ENCODE measurements at regions of chr11 and their contacts with region 1.

Region 1: DNA sequence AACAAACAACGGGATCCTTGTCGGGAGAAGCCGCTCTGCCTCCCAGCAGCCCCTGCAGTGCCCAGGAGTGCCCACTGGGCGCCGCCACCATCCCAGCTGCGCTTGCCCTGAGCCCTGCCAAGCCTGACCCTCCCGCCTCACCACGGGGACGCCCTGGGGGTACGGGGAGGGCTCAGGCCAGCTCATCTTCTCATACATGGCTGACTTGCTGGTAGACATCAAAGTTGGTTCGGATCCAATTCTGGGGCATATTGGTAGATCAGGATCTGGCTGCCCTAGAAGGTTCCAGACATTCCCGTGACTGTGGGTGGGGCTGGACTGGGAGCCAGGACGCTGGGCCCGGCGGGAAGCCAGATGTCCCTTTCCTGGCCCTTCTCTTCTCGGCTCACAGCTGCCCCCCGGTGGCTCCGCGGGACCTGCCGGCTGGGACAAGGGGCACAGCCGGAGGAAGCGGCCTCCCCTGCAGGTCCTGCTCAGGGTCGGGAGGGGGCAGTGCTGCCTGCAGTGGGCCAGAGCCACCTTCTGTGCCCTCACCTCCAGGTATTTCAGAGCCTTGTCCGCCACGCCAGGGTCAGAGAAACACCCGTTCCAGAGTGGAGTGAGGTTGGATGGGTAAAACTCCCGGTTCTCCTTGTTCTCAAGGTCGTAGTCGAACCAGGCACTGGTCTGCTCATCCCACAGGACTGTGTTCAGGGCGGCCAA is 10.6 kb upstream of the TREH start:
- DNase-seq: peak; percentile 96
- ATAC-seq: peak; percentile 86
- H3K4me3 Mint-ChIP-seq: peak overlapping the region; percentile 56
- H3K27ac Mint-ChIP-seq: peak overlapping the region; percentile 41; the same call in 1 of the 2 replicates
- H3K4me1 Mint-ChIP-seq: peaks cover 42% of the 10 kb centered on the region
- H3K27me3 Mint-ChIP-seq: peaks cover 14% of the 10 kb centered on the region; the same call in 1 of the 2 replicates
- CTCF ChIP-seq: peak; percentile 81

Region 2: DNA sequence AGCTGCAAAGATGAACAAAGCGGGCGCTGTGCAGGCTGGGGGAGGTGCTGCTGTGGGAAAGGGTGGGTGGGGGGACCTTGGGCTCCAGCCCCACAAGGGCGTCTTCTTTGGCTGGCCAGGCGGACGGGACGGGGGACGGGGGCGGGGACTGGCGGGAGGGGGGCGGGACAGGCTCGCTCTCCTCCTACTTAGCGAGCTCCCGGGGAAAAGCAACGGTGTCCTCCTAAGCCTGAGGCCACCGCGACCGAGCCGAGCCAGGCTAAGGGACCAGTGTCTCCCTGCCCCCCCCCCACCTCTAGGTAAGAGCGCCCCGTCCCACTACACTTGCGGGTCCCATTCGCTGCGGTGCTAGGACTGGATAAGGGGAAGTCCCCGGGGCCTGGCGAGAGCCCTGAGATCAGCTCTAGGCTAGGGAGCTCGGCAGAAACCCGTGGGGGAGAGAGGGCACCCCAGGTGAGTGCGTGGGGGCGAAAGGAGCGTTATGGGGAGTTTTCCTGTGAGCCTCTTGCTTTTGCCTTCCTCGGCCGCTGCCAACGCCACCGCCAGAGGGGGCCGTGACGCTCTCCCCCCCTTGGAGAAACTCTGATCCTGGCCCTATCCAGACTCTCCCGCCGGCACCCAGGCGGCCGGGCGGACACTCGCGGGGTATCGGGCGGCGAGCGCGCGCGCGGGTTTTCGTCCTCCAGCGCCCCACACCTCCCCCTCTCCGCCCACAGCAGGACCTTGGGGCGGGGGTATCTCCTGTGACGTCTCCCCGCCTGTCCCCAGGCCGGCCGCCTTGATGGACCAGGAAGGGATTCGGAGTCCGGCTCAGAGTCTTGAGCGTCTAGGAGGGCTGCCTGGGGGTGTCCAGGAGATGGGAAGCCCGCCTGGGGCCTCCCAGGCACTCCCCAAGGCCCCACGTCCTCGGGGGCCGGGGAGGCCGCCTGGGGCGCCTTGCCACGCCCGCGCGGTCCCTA is 82.3 kb before region 1 on chr11 and contains the start of gene PHLDB1:
- CTCF ChIA-PET with region 1: no interaction called
- POLR2A ChIA-PET with region 1: no interaction called
- DNase-seq: peak; percentile 57
- ATAC-seq: peak; percentile 3
- H3K4me3 Mint-ChIP-seq: peak within 1 kb of the TSS; percentile 68
- H3K27ac Mint-ChIP-seq: no peak within 1 kb of the TSS
- H3K4me1 Mint-ChIP-seq: peaks cover 48% of the 10 kb centered on the region
- H3K27me3 Mint-ChIP-seq: peaks cover 93% of the 10 kb centered on the region
- CTCF ChIP-seq: 0 out of 2 replicates have a peak, but pooled peaks have one; percentile 19
- total RNA-seq, gene PHLDB1: 70.4 to 83.1 TPM (median 71.5 TPM) in 3 replicates

Region 3: DNA sequence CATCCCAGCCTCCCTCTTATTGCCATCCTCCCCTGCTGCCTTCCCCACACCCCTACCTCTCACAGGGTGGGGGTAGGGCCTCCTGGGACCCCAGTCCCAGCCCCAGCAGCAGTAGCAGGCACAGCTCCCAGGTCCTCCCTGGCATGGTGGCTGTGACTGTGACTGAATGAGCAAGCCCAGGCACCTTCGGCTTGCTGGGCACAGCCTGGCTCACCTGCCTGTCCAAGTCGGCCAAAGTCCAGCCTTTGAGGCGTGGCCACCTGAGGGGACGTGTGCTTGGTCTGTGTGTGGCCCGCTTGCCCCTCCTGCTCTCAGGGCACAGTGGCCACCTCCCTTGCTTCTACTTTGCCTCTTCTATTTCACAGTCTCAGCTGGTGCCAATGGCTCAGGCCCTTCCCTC is 10.5 kb before region 1 on chr11 and contains the start of gene TREH:
- CTCF ChIA-PET with region 1: interaction called, 35 read pairs
- POLR2A ChIA-PET with region 1: no interaction called
- DNase-seq: no peak
- ATAC-seq: no peak
- H3K4me3 Mint-ChIP-seq: no peak within 1 kb of the TSS
- H3K27ac Mint-ChIP-seq: no peak within 1 kb of the TSS
- H3K4me1 Mint-ChIP-seq: peaks cover 12% of the 10 kb centered on the region
- H3K27me3 Mint-ChIP-seq: peaks cover 19% of the 10 kb centered on the region
- CTCF ChIP-seq: no peak
- total RNA-seq, gene TREH: 0.09 TPM in 1 of 3 replicates, not detected in the others

Region 4: GRCh38 chr11:118735203-118735602 is 45.2 kb after region 1 on chr11:
- CTCF ChIA-PET with region 1: interaction called, 15 read pairs
- POLR2A ChIA-PET with region 1: interaction called, 4 read pairs
- DNase-seq: no peak
- ATAC-seq: no peak
- H3K4me3 Mint-ChIP-seq: no peak overlapping the region
- H3K27ac Mint-ChIP-seq: peak overlapping the region; percentile 53
- H3K4me1 Mint-ChIP-seq: peaks cover 28% of the 10 kb centered on the region
- H3K27me3 Mint-ChIP-seq: peaks cover 5% of the 10 kb centered on the region
- CTCF ChIP-seq: no peak

Region 5: DNA sequence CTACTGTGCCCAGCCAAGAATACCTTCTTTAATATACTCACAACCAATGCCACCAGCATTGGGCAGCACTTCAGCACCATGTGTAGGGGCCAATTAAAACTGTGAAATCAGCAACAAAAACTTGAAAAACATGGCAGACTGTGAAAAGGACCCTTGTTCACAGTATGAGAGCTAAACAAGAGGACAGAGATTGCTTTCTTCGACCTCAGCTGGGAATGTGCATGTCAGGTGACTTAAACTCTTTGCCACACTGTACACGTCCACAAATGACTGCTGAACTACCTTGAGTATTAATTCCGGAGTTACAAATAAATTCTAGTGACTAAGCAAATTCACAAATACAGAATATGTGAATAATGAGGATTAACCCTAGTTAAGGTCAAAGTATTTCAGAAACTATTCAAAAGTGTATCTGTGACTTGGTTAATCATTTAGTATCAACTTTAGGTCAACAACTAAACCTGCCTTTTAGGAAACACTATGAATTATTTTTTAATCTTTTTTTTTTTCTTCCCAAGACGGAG is 67.9 kb after region 1 on chr11:
- CTCF ChIA-PET with region 1: interaction called, 16 read pairs
- POLR2A ChIA-PET with region 1: no interaction called
- DNase-seq: no peak
- ATAC-seq: no peak
- H3K4me3 Mint-ChIP-seq: no peak overlapping the region
- H3K27ac Mint-ChIP-seq: peak overlapping the region; percentile 62; the same call in 1 of the 2 replicates
- H3K4me1 Mint-ChIP-seq: no peaks in the 10 kb centered on the region
- H3K27me3 Mint-ChIP-seq: no peaks in the 10 kb centered on the region
- CTCF ChIP-seq: no peak

Region 6: GRCh38 chr11:118870396-118871345 is 180.7 kb after region 1 on chr11:
- CTCF ChIA-PET with region 1: interaction called, 13 read pairs
- POLR2A ChIA-PET with region 1: no interaction called
- DNase-seq: peak; percentile 25
- ATAC-seq: peak; percentile 63
- H3K4me3 Mint-ChIP-seq: peak overlapping the region; percentile 42
- H3K27ac Mint-ChIP-seq: peak overlapping the region; percentile 65; the same call in 1 of the 2 replicates
- H3K4me1 Mint-ChIP-seq: peaks cover 18% of the 10 kb centered on the region
- H3K27me3 Mint-ChIP-seq: no peaks in the 10 kb centered on the region; the same call in 1 of the 2 replicates
- CTCF ChIP-seq: no peak

Region 7: GRCh38 chr11:118956094-118956846 is 266.3 kb after region 1 on chr11 and contains the start of gene UPK2:
- CTCF ChIA-PET with region 1: interaction called, 12 read pairs
- POLR2A ChIA-PET with region 1: no interaction called
- DNase-seq: peak; percentile 96
- ATAC-seq: peak; percentile 96
- H3K4me3 Mint-ChIP-seq: no peak within 1 kb of the TSS
- H3K27ac Mint-ChIP-seq: no peak within 1 kb of the TSS
- H3K4me1 Mint-ChIP-seq: peaks cover 14% of the 10 kb centered on the region
- H3K27me3 Mint-ChIP-seq: peaks cover 17% of the 10 kb centered on the region
- CTCF ChIP-seq: peak; percentile 96
- total RNA-seq, gene UPK2: not detected in 3 replicates

Region 8: GRCh38 chr11:119130662-119131061 is 440.7 kb after region 1 on chr11:
- CTCF ChIA-PET with region 1: no interaction called
- POLR2A ChIA-PET with region 1: no interaction called
- DNase-seq: no peak
- ATAC-seq: no peak
- H3K4me3 Mint-ChIP-seq: no peak overlapping the region
- H3K27ac Mint-ChIP-seq: no peak overlapping the region
- H3K4me1 Mint-ChIP-seq: no peaks in the 10 kb centered on the region
- H3K27me3 Mint-ChIP-seq: no peaks in the 10 kb centered on the region
- CTCF ChIP-seq: no peak

Measured in WTC11 (cell line).